Activated CD8-positive, alpha-beta T cell treated with anti-CD3 and anti-CD28 coated beads, Interleukin-2, amount 10 ng/mL, durations not matched to agents 7 days and 5 days (primary cell): ENCODE measurements at regions of chr3 and their contacts with region 1.

Region 1: GRCh38 chr3:47024932-47025331 is 45.5 kb downstream of the NBEAL2 start:
- DNase-seq: no peak
- ATAC-seq: no peak
- H3K4me3 Mint-ChIP-seq: no peak overlapping the region
- H3K27ac Mint-ChIP-seq: no peak overlapping the region
- H3K4me1 Mint-ChIP-seq: peaks cover 18% of the 10 kb centered on the region
- H3K27me3 Mint-ChIP-seq: no peaks in the 10 kb centered on the region

Region 2: DNA sequence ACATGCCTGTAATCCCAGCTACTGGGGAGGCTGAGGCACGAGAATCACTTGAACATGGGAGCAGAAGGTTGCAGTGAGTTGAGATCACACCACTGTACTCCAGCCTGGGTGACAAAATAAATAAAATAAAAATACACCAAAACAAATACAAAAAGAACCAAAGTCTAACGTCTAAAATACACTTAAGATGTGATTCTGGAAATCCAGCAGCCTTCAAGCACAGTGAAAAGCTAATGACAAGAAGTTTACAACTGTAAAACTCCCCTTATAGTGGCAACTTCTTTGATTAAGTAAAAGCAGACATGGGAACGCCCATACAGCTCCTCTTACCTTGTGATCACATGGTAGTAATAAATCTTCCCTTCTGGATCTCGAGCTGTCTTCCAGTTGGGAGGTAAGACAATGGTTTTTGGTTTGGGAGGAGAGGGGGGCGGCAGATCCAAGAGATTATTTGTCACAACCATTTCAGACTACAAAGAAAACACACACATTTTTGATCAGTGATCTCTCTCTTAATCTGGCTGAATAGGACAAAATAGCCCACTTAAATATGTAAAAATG is 17.4 kb after region 1 on chr3:
- CTCF ChIA-PET with region 1: interaction called, 14 read pairs
- POLR2A ChIA-PET with region 1: no interaction called
- DNase-seq: no peak
- ATAC-seq: no peak
- H3K4me3 Mint-ChIP-seq: no peak overlapping the region
- H3K27ac Mint-ChIP-seq: no peak overlapping the region
- H3K4me1 Mint-ChIP-seq: peaks cover 23% of the 10 kb centered on the region
- H3K27me3 Mint-ChIP-seq: no peaks in the 10 kb centered on the region

Region 3: GRCh38 chr3:47273564-47273963 is 248.6 kb after region 1 on chr3:
- CTCF ChIA-PET with region 1: no interaction called
- POLR2A ChIA-PET with region 1: no interaction called
- DNase-seq: no peak
- ATAC-seq: no peak
- H3K4me3 Mint-ChIP-seq: no peak overlapping the region
- H3K27ac Mint-ChIP-seq: no peak overlapping the region
- H3K4me1 Mint-ChIP-seq: no peaks in the 10 kb centered on the region
- H3K27me3 Mint-ChIP-seq: no peaks in the 10 kb centered on the region